Prostate gland (tissue), 2 donors: ENCODE measurements at regions of chr2 and their contacts with region 1.

Region 1: DNA sequence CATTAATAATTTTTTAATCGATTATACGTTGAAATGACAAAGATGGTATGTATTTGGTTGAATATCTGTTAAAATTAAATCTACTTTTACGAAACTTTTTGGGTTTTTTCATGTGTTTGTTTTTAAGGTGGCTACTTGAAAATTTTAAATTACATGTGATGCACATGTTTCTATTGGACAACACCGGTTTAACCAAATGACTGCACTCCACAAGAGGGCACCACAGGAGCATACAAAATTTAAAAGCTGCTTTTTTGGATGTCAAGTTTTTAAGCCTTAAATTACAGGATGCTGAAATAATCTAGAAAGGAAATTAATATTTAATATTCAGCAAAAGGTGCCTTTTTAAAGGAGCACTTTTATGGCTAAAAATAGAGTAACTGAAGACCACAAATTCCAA is 98.7 kb downstream of the ACVR1 start:
- DNase-seq: no peak
- H3K4me3 ChIP-seq: no peak overlapping the region
- H3K27ac ChIP-seq: no peak overlapping the region
- H3K4me1 ChIP-seq: no peaks in the 10 kb centered on the region
- H3K27me3 ChIP-seq: no peaks in the 10 kb centered on the region
- CTCF ChIP-seq: peak; percentile 9 to 77 (median 68)
- POLR2A ChIP-seq: no peak

Region 2: GRCh38 chr2:158006961-158007719 is 229.7 kb after region 1 on chr2:
- intact Hi-C with region 1: loop called (anchors 5 kb)
- DNase-seq: no peak
- H3K4me3 ChIP-seq: no peak overlapping the region
- H3K27ac ChIP-seq: no peak overlapping the region
- H3K4me1 ChIP-seq: no peaks in the 10 kb centered on the region
- H3K27me3 ChIP-seq: no peaks in the 10 kb centered on the region
- CTCF ChIP-seq: no peak
- POLR2A ChIP-seq: no peak